ENCODE measurements at regions of chr6 and their contacts with region 1.

Region 1: DNA sequence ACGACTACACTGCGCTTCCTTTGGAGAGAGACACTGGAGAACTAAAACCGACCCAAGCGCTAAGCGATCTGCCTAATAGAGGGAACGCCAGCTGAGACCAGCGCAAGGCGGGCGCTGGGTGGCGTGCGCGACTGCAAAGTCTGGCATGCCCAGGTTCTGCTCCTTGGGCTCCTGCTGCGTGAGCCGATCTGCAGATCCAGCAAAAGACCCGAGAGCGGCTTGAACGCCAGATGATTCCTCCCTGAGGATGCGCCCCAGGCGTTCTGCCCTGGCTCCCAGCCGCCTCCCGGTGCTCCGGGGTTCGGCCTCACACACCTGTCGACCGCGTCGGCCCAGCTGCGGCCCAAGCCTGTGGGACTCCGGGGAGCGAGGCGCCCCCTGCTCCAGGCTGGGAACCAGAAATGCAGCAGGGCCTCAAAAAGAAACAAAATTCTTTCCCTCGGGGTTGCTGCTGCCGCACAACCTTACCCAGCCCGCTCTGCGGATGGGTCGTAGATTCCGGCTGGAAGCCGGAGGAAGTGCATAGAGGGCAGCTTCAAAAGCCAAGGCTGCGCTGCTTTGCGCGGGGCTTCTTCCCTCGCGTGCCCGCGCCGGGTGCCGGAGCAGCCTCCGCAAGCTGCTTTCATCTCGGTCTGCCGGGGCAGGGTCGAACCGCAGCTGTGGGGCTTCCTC is 17.9 kb upstream of the PRDM13 start:
- DNase-seq: peak; percentile 83
- H3K4me3 Mint-ChIP-seq: peak overlapping the region; percentile 76
- H3K27ac Mint-ChIP-seq: no peak overlapping the region
- H3K4me1 Mint-ChIP-seq: peaks cover 18% of the 10 kb centered on the region
- H3K27me3 Mint-ChIP-seq: peaks cover 64% of the 10 kb centered on the region

Region 2: GRCh38 chr6:99467509-99468106 is 121.1 kb before region 1 on chr6:
- CTCF ChIA-PET with region 1: no interaction called
- intact Hi-C with region 1: loop called (anchors 1 kb)
- DNase-seq: no peak
- H3K4me3 Mint-ChIP-seq: no peak overlapping the region
- H3K27ac Mint-ChIP-seq: no peak overlapping the region
- H3K4me1 Mint-ChIP-seq: no peaks in the 10 kb centered on the region
- H3K27me3 Mint-ChIP-seq: no peaks in the 10 kb centered on the region

Region 3: DNA sequence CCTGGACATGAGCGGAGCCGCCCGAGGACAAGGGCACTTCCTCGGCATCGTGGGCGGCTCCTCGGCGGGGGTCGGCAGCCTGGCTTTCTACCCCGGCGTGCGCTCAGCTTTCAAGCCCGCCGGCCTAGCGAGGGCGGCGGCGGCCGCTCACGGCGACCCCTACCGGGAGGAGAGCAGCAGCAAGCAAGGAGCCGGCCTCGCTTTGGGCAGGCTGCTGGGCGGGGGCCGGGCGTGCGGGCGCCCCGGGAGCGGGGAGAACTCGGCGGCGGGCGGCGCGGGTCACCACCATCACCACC is 24.6 kb after region 1 on chr6:
- CTCF ChIA-PET with region 1: interaction called, 9 read pairs
- intact Hi-C with region 1: loop called (anchors 1 kb)
- DNase-seq: peak; percentile 35
- H3K4me3 Mint-ChIP-seq: peak overlapping the region; percentile 34
- H3K27ac Mint-ChIP-seq: no peak overlapping the region
- H3K4me1 Mint-ChIP-seq: peaks cover 30% of the 10 kb centered on the region
- H3K27me3 Mint-ChIP-seq: peaks cover 70% of the 10 kb centered on the region

Region 4: DNA sequence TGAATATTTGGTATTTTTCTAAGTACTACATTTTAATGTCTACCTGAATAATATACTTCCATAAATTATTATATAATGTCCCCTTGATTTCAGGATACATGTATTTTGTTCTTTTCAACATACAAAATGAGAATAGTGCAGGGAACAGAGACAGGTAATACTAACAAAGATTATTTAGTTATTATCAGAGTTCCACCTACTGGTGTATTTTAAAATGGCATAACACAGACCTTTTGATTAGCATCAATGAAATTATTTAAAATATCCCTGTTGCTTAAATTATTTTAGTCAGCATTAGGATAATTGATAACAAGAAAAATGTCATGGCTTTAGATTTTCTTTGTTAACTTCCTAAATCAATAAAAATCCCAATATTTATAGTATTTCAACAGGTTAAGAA is 201.9 kb after region 1 on chr6:
- CTCF ChIA-PET with region 1: no interaction called
- intact Hi-C with region 1: loop called (anchors 1 kb)
- DNase-seq: no peak
- H3K4me3 Mint-ChIP-seq: no peak overlapping the region
- H3K27ac Mint-ChIP-seq: no peak overlapping the region
- H3K4me1 Mint-ChIP-seq: no peaks in the 10 kb centered on the region
- H3K27me3 Mint-ChIP-seq: peaks cover 21% of the 10 kb centered on the region

Region 5: GRCh38 chr6:100099189-100100074 is 510.7 kb after region 1 on chr6:
- CTCF ChIA-PET with region 1: no interaction called
- intact Hi-C with region 1: loop called (anchors 5 kb)
- DNase-seq: no peak
- H3K4me3 Mint-ChIP-seq: no peak overlapping the region
- H3K27ac Mint-ChIP-seq: no peak overlapping the region
- H3K4me1 Mint-ChIP-seq: no peaks in the 10 kb centered on the region
- H3K27me3 Mint-ChIP-seq: no peaks in the 10 kb centered on the region

Measured in activated naive CD4-positive, alpha-beta T cell treated with anti-CD3 and anti-CD28 coated beads for 36 hours (primary cell).